CD4-positive, alpha-beta memory T cell (primary cell): ENCODE measurements at regions of chr14 and their contacts with region 1.

Region 1: DNA sequence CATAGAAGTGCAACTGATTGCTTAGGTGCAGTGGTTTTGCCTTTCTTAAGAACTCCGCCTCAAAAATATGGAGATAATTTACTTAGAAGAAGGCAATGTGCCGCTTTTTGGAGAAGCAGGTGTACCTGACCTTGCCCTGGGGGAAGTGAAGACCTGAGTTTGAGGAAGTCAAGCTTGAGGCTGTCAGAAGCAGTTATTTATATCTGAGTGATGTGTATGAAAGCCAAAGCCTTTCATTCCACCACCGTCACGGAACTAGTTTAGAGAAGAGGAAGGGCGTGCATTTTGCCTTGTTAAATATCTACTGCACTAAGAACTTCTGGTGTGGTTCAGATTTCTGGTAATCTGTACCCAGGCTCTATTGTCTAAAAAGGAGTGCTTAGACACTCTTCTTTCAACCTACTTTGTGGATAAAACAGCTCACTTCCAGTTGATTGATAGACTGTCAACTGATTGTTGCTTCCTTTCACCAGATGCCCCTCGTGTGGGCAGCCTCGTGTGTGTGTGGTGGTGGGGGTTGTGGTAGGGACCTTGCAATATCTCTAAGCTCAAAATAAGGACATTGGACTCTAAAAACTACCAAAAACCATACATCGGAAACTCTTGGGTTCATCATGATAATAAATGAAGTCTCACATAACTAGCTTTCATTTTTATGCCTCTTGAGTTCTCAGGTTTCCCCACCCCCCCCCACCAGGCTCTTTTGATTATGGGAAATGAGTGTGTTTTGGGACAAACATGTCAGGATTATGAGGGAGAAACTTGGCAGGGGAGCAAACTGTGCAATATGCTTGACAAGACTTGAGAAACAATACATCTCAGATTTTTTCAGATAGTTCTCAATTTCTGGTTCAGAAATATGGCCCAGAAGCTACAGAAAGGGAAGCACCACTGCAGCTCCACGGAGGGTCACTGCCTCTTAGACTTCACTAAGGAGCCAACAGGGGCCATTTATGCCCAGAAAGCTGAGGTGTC is 78.6 kb downstream of the ARF6 start:
- DNase-seq: peak; percentile 75 to 85 (median 82)
- H3K4me3 ChIP-seq: peak overlapping the region; percentile 36 to 44
- H3K4me3 Mint-ChIP-seq: peak overlapping the region; percentile 77 to 89 (median 82)
- H3K27ac ChIP-seq: peak overlapping the region; percentile 73
- H3K27ac Mint-ChIP-seq: peak overlapping the region; percentile 87 to 98 (median 96)
- H3K4me1 ChIP-seq: peaks cover 69% of the 10 kb centered on the region
- H3K4me1 Mint-ChIP-seq: peaks cover 44 to 76% (median 62%) of the 10 kb centered on the region in 4 donors
- H3K27me3 ChIP-seq: no peaks in the 10 kb centered on the region
- H3K27me3 Mint-ChIP-seq: no peaks in the 10 kb centered on the region

Region 2: GRCh38 chr14:49670475-49670874 is 301.0 kb before region 1 on chr14:
- CTCF ChIA-PET with region 1: no interaction called
- POLR2A ChIA-PET with region 1: no interaction called
- intact Hi-C with region 1: no loop called
- DNase-seq: no peak
- H3K4me3 ChIP-seq: no peak overlapping the region
- H3K4me3 Mint-ChIP-seq: no peak overlapping the region
- H3K27ac ChIP-seq: no peak overlapping the region
- H3K27ac Mint-ChIP-seq: peak overlapping the region in 1 of 7 donors; percentile 22
- H3K4me1 ChIP-seq: no peaks in the 10 kb centered on the region
- H3K4me1 Mint-ChIP-seq: no peaks in the 10 kb centered on the region
- H3K27me3 ChIP-seq: no peaks in the 10 kb centered on the region
- H3K27me3 Mint-ChIP-seq: no peaks in the 10 kb centered on the region

Region 3: DNA sequence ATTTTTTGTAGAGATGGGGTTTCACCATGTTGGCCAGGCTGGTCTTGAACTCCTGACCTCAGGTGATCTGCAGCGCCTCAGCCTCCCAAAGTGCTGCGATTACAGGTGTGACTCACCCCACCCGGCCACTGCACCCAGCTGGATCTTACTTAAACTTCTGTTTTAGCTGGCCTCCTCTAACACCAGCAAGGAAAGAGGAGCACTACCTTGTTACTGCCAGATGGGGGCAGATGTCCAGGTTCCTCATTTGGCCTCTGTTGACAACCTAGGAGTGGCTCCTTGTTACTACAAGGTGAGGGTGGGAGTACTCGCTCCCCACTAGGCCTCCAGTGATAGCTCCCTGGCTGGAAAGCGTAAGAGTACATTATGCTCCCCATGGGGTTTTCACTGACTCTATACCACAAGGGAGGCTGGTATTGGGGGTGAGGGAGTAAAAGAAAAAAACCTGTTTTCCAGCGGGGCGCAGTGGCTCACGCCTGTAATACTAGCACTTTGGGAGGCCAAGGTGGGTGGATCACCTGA is 91.7 kb before region 1 on chr14:
- CTCF ChIA-PET with region 1: interaction called, 13 read pairs
- POLR2A ChIA-PET with region 1: interaction called, 16 read pairs
- intact Hi-C with region 1: no loop called
- DNase-seq: peak; percentile 63 to 72 (median 65)
- H3K4me3 ChIP-seq: no peak overlapping the region
- H3K4me3 Mint-ChIP-seq: no peak overlapping the region
- H3K27ac ChIP-seq: no peak overlapping the region
- H3K27ac Mint-ChIP-seq: peak overlapping the region; percentile 67 to 89 (median 82)
- H3K4me1 ChIP-seq: peaks cover 15% of the 10 kb centered on the region
- H3K4me1 Mint-ChIP-seq: peaks cover 6 to 12% (median 8%) of the 10 kb centered on the region in 4 donors
- H3K27me3 ChIP-seq: no peaks in the 10 kb centered on the region
- H3K27me3 Mint-ChIP-seq: no peaks in the 10 kb centered on the region

Region 4: GRCh38 chr14:49908432-49908781 is 63.0 kb before region 1 on chr14:
- CTCF ChIA-PET with region 1: interaction called, 6 read pairs
- POLR2A ChIA-PET with region 1: interaction called, 23 read pairs
- intact Hi-C with region 1: no loop called
- DNase-seq: no peak
- H3K4me3 ChIP-seq: no peak overlapping the region
- H3K4me3 Mint-ChIP-seq: peak overlapping the region in 1 of 8 donors; percentile 39
- H3K27ac ChIP-seq: no peak overlapping the region
- H3K27ac Mint-ChIP-seq: peak overlapping the region in 2 of 7 donors; percentile 8 to 70
- H3K4me1 ChIP-seq: peaks cover 38% of the 10 kb centered on the region
- H3K4me1 Mint-ChIP-seq: peaks cover 18 to 42% (median 32%) of the 10 kb centered on the region in 4 donors
- H3K27me3 ChIP-seq: no peaks in the 10 kb centered on the region
- H3K27me3 Mint-ChIP-seq: no peaks in the 10 kb centered on the region

Region 5: GRCh38 chr14:49954171-49954631 is 17.2 kb before region 1 on chr14:
- CTCF ChIA-PET with region 1: interaction called, 13 read pairs
- POLR2A ChIA-PET with region 1: interaction called, 195 read pairs
- intact Hi-C with region 1: no loop called
- DNase-seq: no peak
- H3K4me3 ChIP-seq: no peak overlapping the region
- H3K4me3 Mint-ChIP-seq: no peak overlapping the region
- H3K27ac ChIP-seq: no peak overlapping the region
- H3K27ac Mint-ChIP-seq: no peak overlapping the region
- H3K4me1 ChIP-seq: peaks cover 15% of the 10 kb centered on the region
- H3K4me1 Mint-ChIP-seq: peaks cover 10 to 30% (median 21%) of the 10 kb centered on the region in 4 donors
- H3K27me3 ChIP-seq: no peaks in the 10 kb centered on the region
- H3K27me3 Mint-ChIP-seq: no peaks in the 10 kb centered on the region

Region 6: GRCh38 chr14:50038398-50039119 is 67.1 kb after region 1 on chr14:
- CTCF ChIA-PET with region 1: interaction called, 3 read pairs
- POLR2A ChIA-PET with region 1: interaction called, 39 read pairs
- intact Hi-C with region 1: no loop called
- DNase-seq: peak in 2 of 5 donors; percentile 10 to 63
- H3K4me3 ChIP-seq: no peak overlapping the region
- H3K4me3 Mint-ChIP-seq: peak overlapping the region in 7 of 8 donors; percentile 37 to 92 (median 73)
- H3K27ac ChIP-seq: peak overlapping the region; percentile 28
- H3K27ac Mint-ChIP-seq: peak overlapping the region; percentile 81 to 96 (median 93)
- H3K4me1 ChIP-seq: peaks cover 59% of the 10 kb centered on the region
- H3K4me1 Mint-ChIP-seq: peaks cover 38 to 71% (median 57%) of the 10 kb centered on the region in 4 donors
- H3K27me3 ChIP-seq: no peaks in the 10 kb centered on the region
- H3K27me3 Mint-ChIP-seq: no peaks in the 10 kb centered on the region

Region 7: DNA sequence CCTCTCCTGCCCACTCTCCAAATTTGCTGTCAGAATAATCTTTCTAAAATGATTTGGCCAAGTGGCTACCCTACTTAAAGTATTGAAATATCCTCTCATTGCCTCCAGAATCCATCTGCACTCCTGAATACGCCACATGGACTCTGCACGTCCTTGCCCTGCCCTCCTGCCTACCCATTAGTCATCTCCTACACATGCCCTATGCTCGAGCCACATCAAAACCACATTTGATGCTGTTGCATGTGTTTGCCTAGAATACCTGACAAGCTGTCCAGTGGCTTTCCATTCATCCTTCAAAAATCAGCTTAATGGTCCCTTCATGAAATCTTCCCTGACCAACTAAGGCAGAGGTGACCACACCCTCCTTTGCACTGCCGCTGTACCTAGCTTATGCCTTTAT is 127.9 kb after region 1 on chr14:
- CTCF ChIA-PET with region 1: interaction called, 3 read pairs
- POLR2A ChIA-PET with region 1: interaction called, 10 read pairs
- intact Hi-C with region 1: no loop called
- DNase-seq: peak in 1 of 5 donors; percentile 25
- H3K4me3 ChIP-seq: no peak overlapping the region
- H3K4me3 Mint-ChIP-seq: peak overlapping the region in 5 of 8 donors; percentile 7 to 38 (median 28)
- H3K27ac ChIP-seq: no peak overlapping the region
- H3K27ac Mint-ChIP-seq: peak overlapping the region; percentile 10 to 92 (median 80)
- H3K4me1 ChIP-seq: peaks cover 69% of the 10 kb centered on the region
- H3K4me1 Mint-ChIP-seq: peaks cover 41 to 68% (median 54%) of the 10 kb centered on the region in 4 donors
- H3K27me3 ChIP-seq: no peaks in the 10 kb centered on the region
- H3K27me3 Mint-ChIP-seq: no peaks in the 10 kb centered on the region